Activated CD4-positive, alpha-beta memory T cell treated with anti-CD3 and anti-CD28 coated beads for 36 hours (primary cell): ENCODE measurements at regions of chr5 and their contacts with region 1.

Region 1: GRCh38 chr5:65190328-65191053 is 291.2 kb downstream of the ADAMTS6 start:
- DNase-seq: no peak
- H3K4me3 Mint-ChIP-seq: no peak overlapping the region
- H3K27ac Mint-ChIP-seq: no peak overlapping the region
- H3K4me1 Mint-ChIP-seq: peaks cover 15% of the 10 kb centered on the region
- H3K27me3 Mint-ChIP-seq: peaks cover 5% of the 10 kb centered on the region

Region 2: DNA sequence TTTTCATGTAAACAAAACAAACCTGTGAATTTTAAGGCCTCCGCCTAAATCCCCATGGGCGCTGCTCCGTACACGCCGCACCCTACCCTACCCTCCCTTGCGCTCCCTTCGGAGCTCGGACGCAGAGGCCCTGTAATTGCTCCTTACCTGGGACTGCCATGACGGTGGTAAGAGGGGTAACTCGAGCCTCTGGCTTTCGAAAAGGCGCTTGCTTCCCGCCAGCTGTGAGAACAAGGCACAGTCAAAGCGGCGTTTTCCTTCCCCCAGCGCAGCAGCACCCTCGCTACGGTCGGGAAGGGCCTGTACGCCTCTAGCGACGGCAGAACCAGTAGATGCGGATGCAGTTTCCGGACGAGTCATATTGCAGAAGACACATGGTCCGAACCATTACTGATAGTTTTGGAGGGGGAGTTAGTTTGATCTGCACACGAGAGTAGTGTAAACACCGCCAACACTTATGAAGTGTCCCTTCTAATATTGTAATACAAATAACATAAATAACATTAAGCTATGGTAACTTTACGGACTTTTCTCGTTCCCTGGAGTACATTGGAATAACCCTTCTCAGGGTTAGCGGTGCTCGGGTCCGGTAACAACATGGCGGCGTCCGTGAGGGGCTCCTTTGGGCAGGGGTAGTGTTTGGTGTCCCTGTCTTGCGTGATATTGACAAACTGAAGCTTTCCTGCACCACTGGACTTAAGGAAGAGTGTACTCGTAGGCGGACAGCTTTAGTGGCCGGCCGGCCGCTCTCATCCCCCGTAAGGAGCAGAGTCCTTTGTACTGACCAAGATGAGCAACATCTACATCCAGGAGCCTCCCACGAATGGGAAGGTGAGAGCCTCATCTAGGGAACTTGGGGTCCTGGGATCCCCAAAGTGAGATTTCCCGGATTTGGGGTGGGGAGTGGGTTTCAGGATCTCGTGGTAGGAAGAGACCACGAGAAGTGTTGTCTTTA is 421.9 kb before region 1 on chr5 and contains the starts of genes CWC27 and SREK1IP1:
- CTCF ChIA-PET with region 1: no interaction called
- POLR2A ChIA-PET with region 1: no interaction called
- intact Hi-C with region 1: loop called (anchors 1 kb)
- DNase-seq: peak; percentile 89
- H3K4me3 Mint-ChIP-seq: peak within 1 kb of the TSS; percentile 100
- H3K27ac Mint-ChIP-seq: peak within 1 kb of the TSS; percentile 94
- H3K4me1 Mint-ChIP-seq: peaks cover 43% of the 10 kb centered on the region
- H3K27me3 Mint-ChIP-seq: no peaks in the 10 kb centered on the region
- total RNA-seq, gene CWC27: 31.4 to 33.7 TPM
- total RNA-seq, gene SREK1IP1: 20.2 to 24.3 TPM

Region 3: DNA sequence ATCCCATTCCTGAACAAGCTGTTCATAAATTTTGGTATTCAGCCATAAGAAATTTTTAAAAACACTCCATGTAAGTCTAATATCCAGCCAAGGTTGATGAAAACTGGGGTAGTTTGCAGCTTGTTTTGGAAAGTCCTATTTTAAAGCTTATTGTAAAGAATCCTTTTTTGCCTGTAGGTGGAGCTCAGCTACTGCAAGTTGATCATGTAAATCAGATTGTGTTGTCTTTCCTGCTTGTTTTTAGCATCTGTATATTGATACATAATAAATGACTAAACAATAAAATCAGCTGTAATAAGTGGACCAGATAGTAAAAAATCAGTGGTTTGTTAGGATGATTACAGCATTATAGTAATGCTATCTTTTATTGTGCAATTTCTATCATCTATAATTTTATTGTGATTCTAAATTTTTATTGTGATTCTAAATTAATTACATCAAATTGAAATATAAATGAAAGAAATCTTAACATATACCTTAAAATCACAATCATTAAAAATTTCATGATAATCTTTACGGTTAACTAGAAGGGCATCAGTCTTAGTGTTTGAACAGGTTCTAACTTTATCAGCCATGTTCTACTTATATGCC is 379.3 kb before region 1 on chr5:
- CTCF ChIA-PET with region 1: no interaction called
- POLR2A ChIA-PET with region 1: no interaction called
- intact Hi-C with region 1: loop called (anchors 10 kb)
- DNase-seq: no peak
- H3K4me3 Mint-ChIP-seq: no peak overlapping the region
- H3K27ac Mint-ChIP-seq: no peak overlapping the region
- H3K4me1 Mint-ChIP-seq: peaks cover 6% of the 10 kb centered on the region
- H3K27me3 Mint-ChIP-seq: no peaks in the 10 kb centered on the region

Region 4: DNA sequence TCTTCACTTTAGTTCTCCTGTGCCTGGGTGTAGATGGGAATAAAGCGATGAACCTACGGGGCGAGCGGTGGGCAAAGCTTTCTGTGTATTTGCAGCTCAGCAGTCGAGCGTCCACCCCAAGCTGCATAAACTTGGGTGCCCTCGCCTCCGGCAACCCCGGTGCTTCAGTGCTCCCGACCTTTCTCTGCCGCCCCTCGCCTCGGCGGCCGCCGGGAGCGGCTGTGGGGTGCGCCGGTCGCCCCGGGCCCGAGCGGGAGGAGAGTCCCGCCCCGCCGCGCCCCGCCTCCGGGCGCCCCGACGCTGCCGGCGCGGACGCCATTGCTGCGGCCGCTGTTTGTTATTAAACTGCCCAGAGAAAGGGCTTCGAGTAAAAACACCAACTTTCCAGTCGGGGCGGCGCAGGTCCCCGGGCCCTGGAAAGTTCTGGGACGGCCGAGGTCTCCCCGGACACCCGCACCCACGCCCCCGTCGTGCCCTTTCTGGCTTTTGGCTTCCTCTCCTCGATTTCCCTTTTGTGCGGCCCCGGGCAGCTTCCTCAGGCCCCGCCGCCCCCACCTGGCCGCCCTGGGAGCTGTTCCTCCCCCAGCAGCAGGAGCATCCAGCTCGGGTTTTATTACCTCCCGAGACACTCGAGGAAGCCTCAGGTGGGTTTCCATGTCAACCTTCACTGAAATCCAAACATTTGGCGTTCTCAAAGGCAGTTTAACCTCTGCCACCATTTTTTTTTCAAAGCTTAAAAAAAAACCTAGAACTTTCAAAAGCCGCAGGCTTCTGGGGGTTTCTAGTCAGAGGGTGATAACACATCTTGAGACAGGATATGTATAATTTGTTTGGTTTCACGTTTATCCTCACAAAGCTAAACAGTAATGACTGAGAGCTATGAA is 87.4 kb before region 1 on chr5:
- CTCF ChIA-PET with region 1: no interaction called
- POLR2A ChIA-PET with region 1: no interaction called
- intact Hi-C with region 1: loop called (anchors 1 kb)
- DNase-seq: peak; percentile 45
- H3K4me3 Mint-ChIP-seq: peak overlapping the region; percentile 70
- H3K27ac Mint-ChIP-seq: peak overlapping the region; percentile 62
- H3K4me1 Mint-ChIP-seq: peaks cover 31% of the 10 kb centered on the region
- H3K27me3 Mint-ChIP-seq: no peaks in the 10 kb centered on the region

Region 5: DNA sequence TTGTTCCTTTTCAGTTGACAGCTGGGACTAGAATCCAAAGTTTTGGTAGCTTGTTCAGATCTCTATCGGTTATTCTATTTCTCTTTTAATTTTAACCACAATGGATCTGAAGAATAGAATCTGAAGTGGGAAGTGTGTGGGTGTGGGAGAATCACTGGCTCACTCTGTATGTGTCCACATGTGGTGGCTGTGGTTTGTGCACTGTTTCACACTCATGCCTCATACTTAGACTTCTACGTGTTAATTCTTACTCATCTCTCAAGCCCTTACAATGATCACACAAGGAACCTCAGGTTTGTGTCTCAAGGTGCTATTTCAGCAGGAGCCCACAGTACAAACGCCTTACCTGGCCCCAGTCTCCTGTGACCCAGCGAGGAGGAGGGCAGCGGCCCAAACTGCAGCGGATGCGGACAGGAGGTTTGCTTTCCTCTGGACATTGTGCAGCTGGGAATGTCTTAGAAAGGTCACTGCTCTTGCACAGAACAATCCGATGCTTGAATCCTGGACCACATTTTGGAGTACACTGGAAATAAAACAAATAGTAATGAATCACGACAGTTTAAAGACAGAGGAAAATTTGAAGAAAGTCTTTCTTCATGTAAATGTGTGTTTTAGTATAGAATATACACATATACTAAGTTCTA is 17.9 kb before region 1 on chr5:
- CTCF ChIA-PET with region 1: no interaction called
- POLR2A ChIA-PET with region 1: interaction called, 5 read pairs
- intact Hi-C with region 1: loop called (anchors 2 kb)
- DNase-seq: peak; percentile 80
- H3K4me3 Mint-ChIP-seq: no peak overlapping the region
- H3K27ac Mint-ChIP-seq: no peak overlapping the region
- H3K4me1 Mint-ChIP-seq: peaks cover 6% of the 10 kb centered on the region
- H3K27me3 Mint-ChIP-seq: peaks cover 30% of the 10 kb centered on the region

Region 6: DNA sequence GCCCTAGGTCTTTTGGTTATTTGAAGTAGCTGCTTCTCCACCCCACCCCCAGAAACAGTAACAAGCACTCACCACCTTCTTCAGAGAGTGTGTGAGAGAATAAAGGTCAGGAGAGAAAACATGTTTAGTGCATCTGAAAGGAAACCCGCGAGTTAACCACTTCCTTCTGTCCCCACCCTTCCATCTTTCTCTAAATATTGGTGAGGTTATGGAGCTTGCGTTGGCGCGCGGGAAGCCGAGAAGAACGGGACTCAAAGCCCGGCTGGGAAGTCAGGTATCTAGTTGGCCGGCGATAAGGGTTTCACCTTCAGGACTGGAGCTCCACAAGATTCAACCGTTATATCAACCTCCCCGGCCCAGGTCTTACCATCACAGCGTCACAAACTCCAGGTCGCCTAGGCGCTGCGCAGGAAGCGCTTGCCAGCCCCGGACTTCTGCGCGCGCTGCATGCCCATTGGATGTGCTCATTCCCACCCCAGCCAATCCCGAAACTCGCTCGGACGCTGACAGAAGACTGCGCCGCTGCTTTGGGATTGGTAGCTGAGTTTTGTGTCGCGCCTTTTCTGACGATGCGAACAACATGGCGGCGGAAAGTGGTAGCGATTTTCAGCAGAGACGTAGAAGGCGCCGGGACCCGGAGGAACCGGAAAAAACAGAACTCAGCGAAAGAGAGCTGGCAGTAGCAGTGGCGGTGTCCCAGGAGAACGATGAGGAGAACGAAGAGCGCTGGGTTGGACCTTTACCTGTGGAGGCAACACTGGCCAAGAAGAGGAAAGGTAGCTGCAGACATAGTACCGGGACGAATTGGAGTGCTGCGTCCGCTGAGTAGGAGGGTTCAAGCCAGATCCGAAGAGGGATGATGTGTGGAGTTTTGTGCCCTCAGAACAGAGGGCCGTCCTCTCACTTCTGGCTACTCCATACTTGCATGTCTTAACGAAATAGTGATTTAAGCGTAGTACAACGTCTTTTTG is 372.5 kb after region 1 on chr5 and contains the starts of genes CENPK and PPWD1:
- CTCF ChIA-PET with region 1: no interaction called
- POLR2A ChIA-PET with region 1: no interaction called
- intact Hi-C with region 1: loop called (anchors 5 kb)
- DNase-seq: peak; percentile 98
- H3K4me3 Mint-ChIP-seq: peak within 1 kb of the TSS; percentile 92
- H3K27ac Mint-ChIP-seq: peak within 1 kb of the TSS; percentile 93
- H3K4me1 Mint-ChIP-seq: peaks cover 45% of the 10 kb centered on the region
- H3K27me3 Mint-ChIP-seq: no peaks in the 10 kb centered on the region
- total RNA-seq, gene CENPK: 79.7 to 87.5 TPM
- total RNA-seq, gene PPWD1: 38.0 to 42.2 TPM